Endothelial cell of umbilical vein (primary cell): ENCODE measurements at regions of chr1 and their contacts with region 1.

Region 1: GRCh38 chr1:21280011-21280471 is 10.2 kb downstream of the ECE1 start:
- DNase-seq: peak; percentile 92
- H3K4me3 ChIP-seq: peak overlapping the region in 1 of 3 experiments; percentile 68
- H3K27ac ChIP-seq: peak overlapping the region; percentile 98
- H3K4me1 ChIP-seq: peaks cover 64% of the 10 kb centered on the region
- H3K27me3 ChIP-seq: no peaks in the 10 kb centered on the region
- CTCF ChIP-seq: no peak
- POLR2A ChIP-seq: peak; percentile 40

Region 2: GRCh38 chr1:20974069-20974468 is 306.0 kb before region 1 on chr1:
- CTCF ChIA-PET with region 1: no interaction called
- POLR2A ChIA-PET with region 1: no interaction called
- dilution Hi-C with region 1: no loop called
- intact Hi-C with region 1: no loop called
- DNase-seq: no peak
- H3K4me3 ChIP-seq: no peak overlapping the region
- H3K27ac ChIP-seq: no peak overlapping the region
- H3K4me1 ChIP-seq: no peaks in the 10 kb centered on the region
- H3K27me3 ChIP-seq: no peaks in the 10 kb centered on the region
- CTCF ChIP-seq: no peak
- POLR2A ChIP-seq: no peak

Region 3: GRCh38 chr1:21294266-21294989 is 14.4 kb after region 1 on chr1:
- CTCF ChIA-PET with region 1: interaction called, 5 read pairs
- POLR2A ChIA-PET with region 1: interaction called, 12 read pairs
- dilution Hi-C with region 1: no loop called
- intact Hi-C with region 1: loop called (anchors 1 kb)
- DNase-seq: no peak
- H3K4me3 ChIP-seq: no peak overlapping the region
- H3K27ac ChIP-seq: peak overlapping the region; percentile 36
- H3K4me1 ChIP-seq: peaks cover 33% of the 10 kb centered on the region
- H3K27me3 ChIP-seq: no peaks in the 10 kb centered on the region
- CTCF ChIP-seq: no peak
- POLR2A ChIP-seq: no peak

Region 4: DNA sequence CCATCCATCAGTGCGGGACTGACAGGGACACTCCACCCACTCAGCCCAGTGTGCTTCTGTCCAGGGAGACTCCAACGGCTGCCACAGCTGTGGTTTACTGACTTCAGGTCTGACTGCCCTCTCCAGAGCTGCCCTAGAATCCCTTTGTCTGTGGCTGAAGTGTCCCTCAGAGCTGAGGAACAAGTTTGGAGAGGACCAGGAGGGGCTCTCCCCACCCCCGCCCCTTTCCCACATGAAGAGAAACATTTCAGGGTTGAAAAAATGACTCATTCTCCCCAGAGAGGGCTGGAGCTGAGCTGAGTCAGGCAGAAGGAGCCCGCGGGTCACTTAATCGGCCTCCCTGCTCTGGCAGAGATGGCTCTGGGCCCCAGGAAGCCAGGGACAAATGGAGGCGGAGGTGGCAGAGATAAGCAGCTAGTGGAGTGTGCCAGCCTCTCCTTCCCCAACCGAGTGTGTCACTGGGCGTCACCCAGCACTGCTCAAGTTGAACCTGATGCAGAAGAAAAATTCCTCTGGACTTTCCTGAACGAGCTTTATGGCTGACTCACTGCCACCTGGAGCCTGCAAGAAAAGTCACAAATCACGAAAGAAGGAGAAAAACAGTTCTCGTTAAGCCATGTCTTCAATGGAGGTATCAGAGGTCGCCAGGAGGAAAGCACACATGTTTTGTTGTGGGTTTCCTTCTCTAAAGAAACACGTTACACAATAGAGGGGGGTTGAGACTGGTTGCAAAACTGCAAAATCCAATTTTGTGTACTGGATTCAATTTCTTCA is 44.5 kb after region 1 on chr1:
- CTCF ChIA-PET with region 1: interaction called, 33 read pairs
- POLR2A ChIA-PET with region 1: interaction called, 9 read pairs
- dilution Hi-C with region 1: no loop called
- intact Hi-C with region 1: loop called (anchors 1 kb)
- DNase-seq: peak; percentile 93
- H3K4me3 ChIP-seq: no peak overlapping the region
- H3K27ac ChIP-seq: peak overlapping the region; percentile 96
- H3K4me1 ChIP-seq: peaks cover 62% of the 10 kb centered on the region
- H3K27me3 ChIP-seq: no peaks in the 10 kb centered on the region
- CTCF ChIP-seq: no peak
- POLR2A ChIP-seq: peak; percentile 39

Region 5: GRCh38 chr1:21334214-21335087 is 54.4 kb after region 1 on chr1:
- CTCF ChIA-PET with region 1: interaction called, 12 read pairs
- POLR2A ChIA-PET with region 1: interaction called, 7 read pairs
- dilution Hi-C with region 1: no loop called
- intact Hi-C with region 1: loop called (anchors 1 kb)
- DNase-seq: peak; percentile 75
- H3K4me3 ChIP-seq: peak overlapping the region in 1 of 3 experiments; percentile 10
- H3K27ac ChIP-seq: peak overlapping the region; percentile 81
- H3K4me1 ChIP-seq: peaks cover 73% of the 10 kb centered on the region
- H3K27me3 ChIP-seq: no peaks in the 10 kb centered on the region
- CTCF ChIP-seq: peak; percentile 82 to 89
- POLR2A ChIP-seq: peak; percentile 43